ENCODE measurements at regions of chr22 and their contacts with region 1.

Region 1: GRCh38 chr22:40636380-40637182 is at the start of gene MRTFA:
- DNase-seq: peak; percentile 100
- H3K4me3 ChIP-seq: peak within 1 kb of the TSS; percentile 88 to 93
- H3K27ac ChIP-seq: peak within 1 kb of the TSS; percentile 87 to 89
- H3K4me1 ChIP-seq: peaks cover 2% of the 10 kb centered on the region
- H3K27me3 ChIP-seq: no peaks in the 10 kb centered on the region
- CTCF ChIP-seq: peak in 1 of 4 experiments; percentile 25
- POLR2A ChIP-seq: peak; percentile 98
- total RNA-seq, gene MRTFA: 71.0 to 104 TPM

Region 2: GRCh38 chr22:40525249-40525884 is 111.2 kb before region 1 on chr22:
- intact Hi-C with region 1: loop called (anchors 5 kb)
- DNase-seq: no peak
- H3K4me3 ChIP-seq: no peak overlapping the region
- H3K27ac ChIP-seq: no peak overlapping the region
- H3K4me1 ChIP-seq: no peaks in the 10 kb centered on the region
- H3K27me3 ChIP-seq: no peaks in the 10 kb centered on the region
- CTCF ChIP-seq: peak; percentile 20 to 50 (median 44)
- POLR2A ChIP-seq: no peak

Region 3: GRCh38 chr22:40721266-40721665 is 84.7 kb after region 1 on chr22:
- intact Hi-C with region 1: no loop called
- DNase-seq: no peak
- H3K4me3 ChIP-seq: no peak overlapping the region
- H3K27ac ChIP-seq: no peak overlapping the region
- H3K4me1 ChIP-seq: no peaks in the 10 kb centered on the region
- H3K27me3 ChIP-seq: no peaks in the 10 kb centered on the region
- CTCF ChIP-seq: no peak
- POLR2A ChIP-seq: no peak

Region 4: GRCh38 chr22:40739721-40740120 is 103.1 kb after region 1 on chr22:
- intact Hi-C with region 1: no loop called
- DNase-seq: no peak
- H3K4me3 ChIP-seq: no peak overlapping the region
- H3K27ac ChIP-seq: no peak overlapping the region
- H3K4me1 ChIP-seq: no peaks in the 10 kb centered on the region
- H3K27me3 ChIP-seq: no peaks in the 10 kb centered on the region
- CTCF ChIP-seq: no peak
- POLR2A ChIP-seq: no peak

Measured in prostate gland (tissue), 2 donors.